AG04450 (cell line): ENCODE measurements at regions of chr1 and their contacts with region 1.

Region 1: GRCh38 chr1:85307987-85308832 is 31.8 kb upstream of the BCL10 start:
- DNase-seq: no peak
- H3K4me3 ChIP-seq: no peak overlapping the region
- H3K27ac ChIP-seq: no peak overlapping the region
- H3K27me3 ChIP-seq: no peaks in the 10 kb centered on the region
- CTCF ChIP-seq: peak; percentile 99

Region 2: DNA sequence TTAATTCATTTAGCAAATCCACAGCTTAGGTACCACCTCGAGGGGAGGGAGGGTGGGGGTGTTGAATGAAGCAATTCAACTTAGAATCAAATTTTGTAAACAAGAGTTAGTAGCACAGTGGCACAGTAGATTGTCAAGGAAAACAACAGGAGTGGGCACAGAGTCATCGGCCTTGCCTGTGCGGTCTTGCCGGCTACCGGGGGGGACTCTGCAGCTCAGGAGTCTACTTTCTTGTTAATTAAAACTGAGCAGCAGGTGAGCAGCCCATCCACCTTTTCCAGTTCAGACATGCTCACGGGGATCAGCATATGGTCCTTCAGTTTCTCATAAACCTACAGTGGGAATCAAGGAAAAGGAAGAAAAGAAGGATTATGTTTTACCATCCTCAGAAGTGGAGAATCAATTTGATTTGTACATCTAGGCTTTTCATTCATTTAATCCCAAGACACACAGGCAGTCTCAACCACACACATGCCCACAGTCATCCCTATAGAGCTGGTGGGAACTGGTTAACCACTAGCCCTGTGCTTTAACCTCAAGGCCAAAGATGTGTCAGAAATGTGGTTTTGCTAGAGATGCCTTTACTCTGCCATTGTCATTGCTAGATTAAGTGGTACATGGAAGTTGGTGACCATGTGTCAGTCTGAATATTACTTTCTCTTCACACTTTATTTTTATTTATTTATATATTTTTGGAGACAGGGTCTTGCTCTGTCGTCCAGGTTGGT is 13.2 kb after region 1 on chr1:
- CTCF ChIA-PET with region 1: no interaction called
- POLR2A ChIA-PET with region 1: no interaction called
- DNase-seq: no peak
- H3K4me3 ChIP-seq: no peak overlapping the region
- H3K27ac ChIP-seq: no peak overlapping the region
- H3K27me3 ChIP-seq: no peaks in the 10 kb centered on the region
- CTCF ChIP-seq: no peak

Region 3: DNA sequence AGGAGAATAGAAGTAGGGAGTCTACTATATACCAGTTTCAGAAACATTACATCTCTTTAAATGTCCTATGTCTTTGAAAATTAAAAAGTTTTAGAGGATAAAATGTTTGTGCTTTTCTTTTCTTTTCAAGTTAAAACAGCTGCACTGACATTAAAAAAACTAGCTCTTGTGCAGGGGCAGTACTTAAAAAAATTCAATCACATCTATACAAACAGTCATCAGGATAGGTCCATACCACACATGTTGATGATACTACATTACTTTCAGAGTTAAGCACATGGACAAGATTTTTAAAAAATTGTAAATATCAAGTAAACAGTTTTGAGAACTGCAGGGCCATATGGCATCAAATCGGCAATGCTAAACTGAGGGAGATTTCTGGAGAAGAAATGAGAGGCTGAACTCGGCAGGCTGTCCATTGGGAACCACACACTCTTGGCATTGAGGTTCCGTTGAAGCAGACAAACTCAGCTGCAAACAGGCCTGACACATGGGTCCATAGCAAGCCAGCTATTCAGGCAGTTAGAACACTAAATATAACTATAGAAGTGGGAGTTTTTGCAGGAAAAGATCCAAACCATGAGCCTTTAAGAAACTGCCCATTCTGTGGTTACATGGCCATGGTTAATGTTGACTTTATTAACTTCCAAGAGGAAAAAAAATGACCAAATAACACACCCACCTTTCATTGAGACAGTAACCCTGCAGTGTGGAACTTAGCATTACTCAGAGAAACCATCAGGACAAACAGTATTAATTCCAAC is 52.7 kb after region 1 on chr1:
- CTCF ChIA-PET with region 1: interaction called, 13 read pairs
- POLR2A ChIA-PET with region 1: no interaction called
- DNase-seq: peak; percentile 36
- H3K4me3 ChIP-seq: peak overlapping the region; percentile 2; the same call in 1 of the 2 replicates
- H3K27ac ChIP-seq: peak overlapping the region; percentile 42
- H3K27me3 ChIP-seq: no peaks in the 10 kb centered on the region
- CTCF ChIP-seq: no peak

Region 4: DNA sequence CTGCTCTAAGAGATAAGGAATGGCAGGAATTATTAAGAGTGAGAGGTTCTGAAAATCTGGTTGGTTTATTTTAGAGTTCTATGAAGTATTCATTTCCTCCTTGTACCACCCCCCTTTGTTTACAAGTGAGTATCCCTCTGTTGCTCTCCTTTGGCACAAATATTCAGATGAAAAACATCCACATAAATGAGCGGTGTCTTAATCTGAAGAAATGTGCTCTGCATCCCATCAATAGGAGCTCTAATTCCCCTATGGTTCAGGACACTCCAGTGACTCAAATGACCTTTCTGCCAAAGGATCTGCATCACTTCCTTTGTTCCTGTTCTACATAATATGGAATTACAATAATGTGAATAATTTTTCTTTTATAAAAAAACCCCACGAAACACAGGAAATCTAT is 140.1 kb after region 1 on chr1:
- CTCF ChIA-PET with region 1: interaction called, 10 read pairs
- POLR2A ChIA-PET with region 1: no interaction called
- DNase-seq: no peak
- H3K4me3 ChIP-seq: no peak overlapping the region
- H3K27ac ChIP-seq: no peak overlapping the region
- H3K27me3 ChIP-seq: no peaks in the 10 kb centered on the region
- CTCF ChIP-seq: no peak

Region 5: GRCh38 chr1:85494074-85494903 is 186.1 kb after region 1 on chr1:
- CTCF ChIA-PET with region 1: interaction called, 12 read pairs
- POLR2A ChIA-PET with region 1: no interaction called
- DNase-seq: no peak
- H3K4me3 ChIP-seq: no peak overlapping the region
- H3K27ac ChIP-seq: no peak overlapping the region
- H3K27me3 ChIP-seq: no peaks in the 10 kb centered on the region
- CTCF ChIP-seq: no peak

Region 6: GRCh38 chr1:85569122-85569521 is 260.9 kb after region 1 on chr1:
- CTCF ChIA-PET with region 1: interaction called, 21 read pairs
- POLR2A ChIA-PET with region 1: no interaction called
- DNase-seq: peak; percentile 68
- H3K4me3 ChIP-seq: no peak overlapping the region
- H3K27ac ChIP-seq: peak overlapping the region; percentile 63
- H3K27me3 ChIP-seq: no peaks in the 10 kb centered on the region
- CTCF ChIP-seq: no peak

Region 7: GRCh38 chr1:85692730-85693314 is 384.6 kb after region 1 on chr1:
- CTCF ChIA-PET with region 1: interaction called, 55 read pairs
- POLR2A ChIA-PET with region 1: no interaction called
- DNase-seq: peak; percentile 33
- H3K4me3 ChIP-seq: no peak overlapping the region
- H3K27ac ChIP-seq: no peak overlapping the region
- H3K27me3 ChIP-seq: no peaks in the 10 kb centered on the region
- CTCF ChIP-seq: peak; percentile 56